Mammary epithelial cell (primary cell): ENCODE measurements at regions of chr4 and their contacts with region 1.

Region 1: GRCh38 chr4:163473576-163473975 is at the start of gene TKTL2:
- DNase-seq: no peak
- H3K4me3 ChIP-seq: no peak within 1 kb of the TSS
- H3K27ac ChIP-seq: no peak within 1 kb of the TSS
- H3K4me1 ChIP-seq: no peaks in the 10 kb centered on the region
- H3K27me3 ChIP-seq: peaks cover 5% of the 10 kb centered on the region
- CTCF ChIP-seq: no peak
- total RNA-seq, gene TKTL2: not detected

Region 2: DNA sequence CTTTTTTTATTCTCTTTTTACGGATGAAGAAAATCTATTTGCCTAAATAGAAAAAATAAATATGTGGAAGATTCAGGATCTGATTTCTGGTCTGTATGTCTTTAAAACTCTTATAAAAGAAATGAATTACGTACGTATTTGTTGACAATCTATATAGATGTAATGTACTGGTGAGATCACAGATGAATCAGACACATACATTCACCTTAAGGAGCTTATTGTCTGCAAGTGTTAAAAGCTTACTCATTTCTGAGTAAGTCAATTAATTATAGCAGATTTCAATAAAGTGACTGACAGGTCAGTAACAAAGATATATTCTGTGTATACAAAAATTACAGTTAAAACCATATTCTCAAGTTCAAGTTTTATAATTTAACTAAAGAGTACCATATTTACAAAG is 240.3 kb before region 1 on chr4:
- CTCF ChIA-PET with region 1: no interaction called
- dilution Hi-C with region 1: no loop called
- in situ Hi-C with region 1: no loop called
- intact Hi-C with region 1: no loop called
- DNase-seq: no peak
- H3K4me3 ChIP-seq: no peak overlapping the region
- H3K27ac ChIP-seq: no peak overlapping the region
- H3K4me1 ChIP-seq: no peaks in the 10 kb centered on the region
- H3K27me3 ChIP-seq: no peaks in the 10 kb centered on the region
- CTCF ChIP-seq: no peak

Region 3: DNA sequence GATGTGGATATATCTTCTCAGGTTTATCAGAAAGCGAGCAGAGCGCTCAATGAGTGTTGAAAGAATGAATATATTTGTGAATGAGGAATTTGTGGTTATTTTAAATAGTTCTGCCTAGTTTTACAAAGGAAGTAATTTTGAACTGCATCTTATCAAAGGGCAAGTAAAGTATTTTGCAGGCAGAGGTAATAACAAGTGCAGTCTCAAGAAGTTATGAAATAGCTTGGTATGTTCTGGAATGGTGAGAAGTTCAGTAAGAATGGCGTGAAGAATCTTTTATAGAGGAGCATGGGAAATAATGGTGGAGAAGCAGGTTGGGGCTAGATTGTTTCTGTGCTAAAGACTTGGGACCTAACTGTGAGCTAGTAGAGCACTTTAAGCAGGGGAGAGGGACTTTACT is 31.8 kb after region 1 on chr4:
- CTCF ChIA-PET with region 1: no interaction called
- dilution Hi-C with region 1: loop called (anchors 5 kb)
- in situ Hi-C with region 1: no loop called
- intact Hi-C with region 1: no loop called
- DNase-seq: no peak
- H3K4me3 ChIP-seq: no peak overlapping the region
- H3K27ac ChIP-seq: no peak overlapping the region
- H3K4me1 ChIP-seq: no peaks in the 10 kb centered on the region
- H3K27me3 ChIP-seq: no peaks in the 10 kb centered on the region
- CTCF ChIP-seq: no peak